CD4-positive, alpha-beta memory T cell (primary cell): ENCODE measurements at regions of chr13 and their contacts with region 1.

Region 1: GRCh38 chr13:99322297-99323103 is 15.3 kb upstream of the GPR183 start:
- DNase-seq: peak; percentile 63 to 72 (median 68)
- H3K4me3 ChIP-seq: peak overlapping the region in 1 of 2 donors; percentile 5
- H3K4me3 Mint-ChIP-seq: peak overlapping the region; percentile 20 to 82 (median 68)
- H3K27ac ChIP-seq: peak overlapping the region; percentile 79
- H3K27ac Mint-ChIP-seq: peak overlapping the region; percentile 91 to 99 (median 94)
- H3K4me1 ChIP-seq: peaks cover 87% of the 10 kb centered on the region
- H3K4me1 Mint-ChIP-seq: peaks cover 54 to 84% (median 69%) of the 10 kb centered on the region in 4 donors
- H3K27me3 ChIP-seq: no peaks in the 10 kb centered on the region
- H3K27me3 Mint-ChIP-seq: no peaks in the 10 kb centered on the region

Region 2: DNA sequence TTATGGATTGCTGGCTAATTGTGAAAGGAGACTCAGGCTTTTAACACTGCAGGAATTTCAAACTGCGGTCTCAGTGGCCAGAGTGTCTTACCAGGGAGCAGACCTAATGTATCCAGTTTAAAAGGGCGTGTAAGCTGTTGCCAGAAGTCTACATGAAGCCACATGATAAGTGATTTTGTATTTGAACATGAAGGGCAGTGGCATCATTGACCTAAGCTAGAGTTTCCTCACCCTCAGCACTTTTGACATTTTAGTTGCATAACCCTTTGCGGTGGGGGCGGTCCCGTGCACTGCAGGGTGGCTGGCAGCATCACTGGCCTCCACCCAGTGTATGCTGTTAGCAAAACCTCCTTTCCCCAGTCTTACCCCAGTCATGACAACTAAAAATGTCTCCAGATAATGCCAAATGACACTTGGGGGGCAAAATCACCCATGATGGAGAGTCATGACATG is 40.7 kb before region 1 on chr13:
- CTCF ChIA-PET with region 1: interaction called, 4 read pairs
- POLR2A ChIA-PET with region 1: interaction called, 6 read pairs
- intact Hi-C with region 1: loop called (anchors 2 kb)
- DNase-seq: peak; percentile 65 to 79 (median 74)
- H3K4me3 ChIP-seq: peak overlapping the region in 1 of 2 donors; percentile 16
- H3K4me3 Mint-ChIP-seq: peak overlapping the region; percentile 67 to 92 (median 82)
- H3K27ac ChIP-seq: peak overlapping the region; percentile 66
- H3K27ac Mint-ChIP-seq: peak overlapping the region; percentile 88 to 100 (median 99)
- H3K4me1 ChIP-seq: peaks cover 96% of the 10 kb centered on the region
- H3K4me1 Mint-ChIP-seq: peaks cover 77 to 99% (median 88%) of the 10 kb centered on the region in 4 donors
- H3K27me3 ChIP-seq: no peaks in the 10 kb centered on the region
- H3K27me3 Mint-ChIP-seq: no peaks in the 10 kb centered on the region

Region 3: DNA sequence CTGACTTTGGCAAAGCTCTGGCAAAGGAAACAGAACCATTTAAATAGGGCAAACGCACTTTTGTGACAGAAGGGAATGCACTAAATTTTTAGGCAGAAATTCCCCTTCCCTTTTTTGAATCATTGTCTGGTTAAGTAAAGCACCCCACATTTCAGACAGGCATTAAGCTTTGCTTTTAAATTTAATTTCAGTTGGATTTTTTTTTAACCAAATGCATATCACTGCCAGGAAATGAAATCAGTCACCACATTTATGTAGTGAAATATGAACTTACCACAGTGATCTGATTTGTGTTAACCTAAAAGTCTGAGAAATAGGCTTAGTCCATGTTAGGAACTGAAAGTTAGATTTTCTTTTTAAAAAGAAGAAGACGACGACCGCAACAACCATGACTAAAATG is 26.1 kb before region 1 on chr13:
- CTCF ChIA-PET with region 1: interaction called, 5 read pairs
- POLR2A ChIA-PET with region 1: interaction called, 247 read pairs
- intact Hi-C with region 1: no loop called
- DNase-seq: peak; percentile 46 to 69 (median 59)
- H3K4me3 ChIP-seq: peak overlapping the region in 1 of 2 donors; percentile 8
- H3K4me3 Mint-ChIP-seq: peak overlapping the region; percentile 76 to 87 (median 86)
- H3K27ac ChIP-seq: peak overlapping the region; percentile 66
- H3K27ac Mint-ChIP-seq: peak overlapping the region; percentile 86 to 96 (median 94)
- H3K4me1 ChIP-seq: peaks cover 94% of the 10 kb centered on the region
- H3K4me1 Mint-ChIP-seq: peaks cover 58 to 92% (median 70%) of the 10 kb centered on the region in 4 donors
- H3K27me3 ChIP-seq: no peaks in the 10 kb centered on the region
- H3K27me3 Mint-ChIP-seq: no peaks in the 10 kb centered on the region

Region 4: GRCh38 chr13:99339736-99340397 is 17.4 kb after region 1 on chr13:
- CTCF ChIA-PET with region 1: interaction called, 10 read pairs
- POLR2A ChIA-PET with region 1: interaction called, 51 read pairs
- intact Hi-C with region 1: loop called (anchors 1 kb)
- DNase-seq: peak; percentile 71 to 86 (median 76)
- H3K4me3 ChIP-seq: peak overlapping the region; percentile 4 to 37
- H3K4me3 Mint-ChIP-seq: peak overlapping the region; percentile 68 to 91 (median 85)
- H3K27ac ChIP-seq: peak overlapping the region; percentile 47
- H3K27ac Mint-ChIP-seq: peak overlapping the region; percentile 76 to 94 (median 91)
- H3K4me1 ChIP-seq: peaks cover 86% of the 10 kb centered on the region
- H3K4me1 Mint-ChIP-seq: peaks cover 71 to 97% (median 83%) of the 10 kb centered on the region in 4 donors
- H3K27me3 ChIP-seq: no peaks in the 10 kb centered on the region
- H3K27me3 Mint-ChIP-seq: no peaks in the 10 kb centered on the region

Region 5: DNA sequence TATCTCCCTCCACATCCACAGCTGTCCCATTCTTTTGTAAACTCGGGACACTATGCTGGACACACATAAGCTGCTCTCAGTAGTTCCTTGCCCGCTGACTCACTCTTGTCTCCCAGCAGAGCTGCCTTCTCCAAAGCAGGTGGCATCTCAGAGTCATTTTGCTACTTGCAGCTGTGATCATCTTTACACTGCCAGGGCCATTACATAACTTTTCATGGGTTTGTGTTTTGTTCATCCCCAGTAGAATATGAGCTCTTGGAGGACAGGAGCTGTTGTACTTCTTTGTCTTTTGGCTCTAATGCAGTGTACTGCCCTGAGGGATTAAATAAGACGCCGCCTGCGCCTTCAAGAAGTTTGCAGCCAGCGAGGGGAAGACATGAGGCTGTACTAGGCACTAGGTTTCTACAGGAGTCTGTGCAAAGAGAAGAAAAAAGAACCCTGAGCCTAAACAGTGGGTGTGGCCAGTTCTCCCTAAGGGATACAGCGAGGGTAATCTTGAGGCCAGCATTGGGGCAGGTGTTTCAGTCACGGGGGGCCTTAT is 25.5 kb after region 1 on chr13:
- CTCF ChIA-PET with region 1: interaction called, 9 read pairs
- POLR2A ChIA-PET with region 1: interaction called, 417 read pairs
- intact Hi-C with region 1: loop called (anchors 1 kb)
- DNase-seq: no peak
- H3K4me3 ChIP-seq: no peak overlapping the region
- H3K4me3 Mint-ChIP-seq: peak overlapping the region in 5 of 8 donors; percentile 30 to 66 (median 56)
- H3K27ac ChIP-seq: peak overlapping the region; percentile 9
- H3K27ac Mint-ChIP-seq: peak overlapping the region; percentile 79 to 99 (median 94)
- H3K4me1 ChIP-seq: peaks cover 84% of the 10 kb centered on the region
- H3K4me1 Mint-ChIP-seq: peaks cover 79 to 98% (median 88%) of the 10 kb centered on the region in 4 donors
- H3K27me3 ChIP-seq: no peaks in the 10 kb centered on the region
- H3K27me3 Mint-ChIP-seq: no peaks in the 10 kb centered on the region

Region 6: DNA sequence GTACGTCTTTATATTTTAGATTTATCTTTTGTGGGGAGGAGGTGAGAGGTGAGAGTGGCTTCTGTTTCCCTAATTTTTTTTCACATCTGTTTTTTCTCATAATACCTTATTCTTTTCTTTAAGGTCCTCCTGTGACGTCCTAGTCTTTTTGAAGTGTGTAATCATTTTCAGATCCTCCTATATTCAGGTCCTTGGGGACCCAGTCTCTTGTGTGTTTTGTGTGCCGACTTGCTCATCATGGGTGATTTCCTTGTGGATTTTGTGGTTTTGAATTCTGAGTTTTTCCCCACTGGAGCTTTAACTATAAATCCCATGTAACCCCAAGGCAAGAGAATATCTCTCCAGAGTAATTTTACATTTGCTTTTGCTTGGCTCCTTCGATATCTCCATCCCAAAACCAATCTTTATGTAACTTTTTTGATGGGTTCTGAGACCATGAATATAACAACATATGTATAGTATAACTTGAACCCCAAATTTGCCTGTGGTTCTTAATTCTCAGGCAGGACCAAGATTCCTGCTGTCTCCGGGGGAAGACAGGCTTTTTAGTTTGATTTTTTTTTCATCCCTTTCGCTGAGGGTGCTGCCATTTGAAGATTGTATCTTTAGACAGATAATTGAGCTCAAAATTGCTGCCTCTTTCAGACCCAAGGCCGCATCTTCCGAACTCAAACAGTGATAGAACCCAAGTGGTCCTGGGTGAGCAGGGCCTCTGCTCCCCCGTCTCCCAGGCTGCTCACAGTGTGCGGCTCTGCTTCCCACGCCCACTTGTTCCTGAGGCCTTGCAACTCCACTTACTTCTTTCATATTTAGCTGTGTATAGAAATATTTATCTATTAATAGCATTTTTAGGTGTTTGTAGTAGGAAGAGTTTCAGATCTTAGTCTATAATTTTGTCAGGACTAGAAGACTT is 43.8 kb after region 1 on chr13:
- CTCF ChIA-PET with region 1: interaction called, 8 read pairs
- POLR2A ChIA-PET with region 1: interaction called, 417 read pairs
- intact Hi-C with region 1: no loop called
- DNase-seq: no peak
- H3K4me3 ChIP-seq: peak overlapping the region in 1 of 2 donors; percentile 22
- H3K4me3 Mint-ChIP-seq: peak overlapping the region; percentile 41 to 93 (median 78)
- H3K27ac ChIP-seq: peak overlapping the region; percentile 70
- H3K27ac Mint-ChIP-seq: peak overlapping the region; percentile 96 to 98 (median 97)
- H3K4me1 ChIP-seq: peaks cover 98% of the 10 kb centered on the region
- H3K4me1 Mint-ChIP-seq: peaks cover 73 to 98% (median 85%) of the 10 kb centered on the region in 4 donors
- H3K27me3 ChIP-seq: no peaks in the 10 kb centered on the region
- H3K27me3 Mint-ChIP-seq: no peaks in the 10 kb centered on the region